ENCODE measurements at regions of chr7 and their contacts with region 1.

Region 1: GRCh38 chr7:99928994-99929729 is at the start of gene GJC3:
- DNase-seq: no peak
- H3K4me3 ChIP-seq: peak within 1 kb of the TSS in 3 of 4 donors; percentile 26 to 59 (median 34)
- H3K27ac ChIP-seq: peak within 1 kb of the TSS in 3 of 4 donors; percentile 4 to 40 (median 18)
- H3K4me1 ChIP-seq: peaks cover 7 to 15% (median 11%) of the 10 kb centered on the region in 3 donors
- H3K27me3 ChIP-seq: peaks cover 0 to 34% (median 0%) of the 10 kb centered on the region in 4 donors
- CTCF ChIP-seq: peak in 3 of 6 experiments; percentile 19 to 48 (median 39)
- POLR2A ChIP-seq: no peak
- total RNA-seq, gene GJC3: 0.26 TPM in 1 of 4 donors, not detected in the others

Region 2: DNA sequence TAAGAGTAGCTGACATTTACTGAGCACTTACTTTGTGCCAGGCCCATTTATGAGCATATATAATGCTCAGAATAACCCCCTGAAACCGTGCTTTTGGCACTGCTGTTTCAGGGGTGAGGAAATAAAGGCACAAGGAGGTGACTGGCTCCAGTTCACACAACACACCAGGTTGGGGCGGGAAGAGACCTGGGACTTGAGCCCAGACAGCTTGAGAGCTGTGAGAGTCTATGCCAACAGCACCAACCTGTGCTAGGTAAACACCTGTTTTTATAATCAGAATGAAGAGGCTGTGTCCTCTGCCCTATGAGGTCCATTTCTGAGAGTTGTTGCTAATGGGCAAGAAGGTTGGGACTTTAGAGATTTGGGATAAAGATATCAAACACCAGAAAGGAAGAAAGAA is 55.4 kb after region 1 on chr7:
- intact Hi-C with region 1: loop called (anchors 10 kb)
- DNase-seq: no peak
- H3K4me3 ChIP-seq: no peak overlapping the region
- H3K27ac ChIP-seq: no peak overlapping the region
- H3K4me1 ChIP-seq: peaks cover 0 to 3% (median 0%) of the 10 kb centered on the region in 3 donors
- H3K27me3 ChIP-seq: peaks cover 0 to 4% (median 0%) of the 10 kb centered on the region in 4 donors
- CTCF ChIP-seq: no peak
- POLR2A ChIP-seq: no peak

Region 3: DNA sequence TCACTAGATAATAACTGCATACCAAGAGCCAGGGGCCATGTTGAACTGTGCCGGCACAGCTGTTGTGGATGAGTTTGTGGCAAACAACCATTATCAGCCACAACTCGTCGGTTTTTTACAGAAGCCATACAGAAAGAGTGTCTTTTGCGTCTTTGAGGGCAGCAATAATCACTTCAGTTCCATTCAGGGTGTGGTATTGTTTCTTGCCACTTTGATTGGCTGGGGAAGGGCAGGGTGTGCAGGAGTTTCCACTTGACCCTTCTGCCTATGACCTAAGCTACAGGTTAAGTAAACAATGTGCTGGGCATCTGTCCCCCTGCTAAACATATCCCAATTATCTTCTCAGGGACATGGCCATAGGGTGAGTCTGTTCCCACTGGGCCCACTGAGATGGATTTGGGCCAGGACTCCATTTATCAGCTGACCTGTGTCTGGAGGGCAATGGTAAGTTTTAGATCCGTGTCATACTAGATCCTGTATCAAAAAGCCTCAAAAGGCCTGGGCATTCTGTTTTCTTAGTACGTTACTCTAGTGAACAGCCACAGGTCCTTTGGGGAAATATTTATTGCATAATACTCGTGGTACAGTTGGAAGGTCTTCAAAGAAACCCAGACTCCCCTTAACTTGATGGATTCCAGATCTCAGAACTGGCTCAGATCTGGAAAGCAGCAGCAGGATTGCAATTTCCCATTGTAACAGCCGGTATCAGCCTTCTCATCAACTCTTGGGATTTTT is 136.5 kb after region 1 on chr7:
- intact Hi-C with region 1: loop called (anchors 10 kb)
- DNase-seq: no peak
- H3K4me3 ChIP-seq: no peak overlapping the region
- H3K27ac ChIP-seq: peak overlapping the region in 2 of 4 donors; percentile 35 to 53
- H3K4me1 ChIP-seq: peaks cover 0 to 8% (median 0%) of the 10 kb centered on the region in 3 donors
- H3K27me3 ChIP-seq: no peaks in the 10 kb centered on the region
- CTCF ChIP-seq: no peak
- POLR2A ChIP-seq: no peak